Psoas muscle (tissue), 8 donors: ENCODE measurements at regions of chr15 and their contacts with region 1.

Region 1: DNA sequence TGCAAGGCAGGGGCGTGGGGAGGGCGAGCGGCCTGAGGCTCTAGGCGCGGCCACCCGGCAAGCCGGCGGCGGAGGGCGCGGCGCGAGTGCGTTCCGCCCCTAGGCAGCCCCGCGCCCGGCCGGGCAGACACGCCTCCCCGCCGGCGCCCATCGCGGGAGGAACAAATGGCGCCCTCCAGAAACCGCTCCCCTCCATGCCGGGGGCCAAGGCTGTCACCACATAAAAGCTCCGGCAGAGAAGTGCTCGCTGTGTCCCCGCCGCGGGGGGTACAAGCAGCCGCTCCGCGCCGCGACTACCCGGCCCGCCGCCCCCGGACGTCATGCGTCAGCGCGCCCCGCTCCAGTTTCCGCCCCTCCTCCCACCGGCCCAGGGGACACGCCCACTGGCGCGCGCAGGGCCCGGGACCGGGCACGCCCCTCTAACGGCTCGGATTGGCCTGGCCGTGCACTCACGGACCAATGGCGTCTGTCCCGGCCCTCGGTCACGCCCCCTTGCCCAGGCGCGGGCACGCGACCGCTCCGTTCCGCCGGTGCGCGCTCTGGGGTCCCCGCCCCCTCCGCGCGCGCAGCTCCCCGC is 391 bp upstream of the KLF13 start:
- DNase-seq: peak; percentile 94 to 100
- ATAC-seq: peak; percentile 91 to 96 (median 92)
- H3K4me3 ChIP-seq: peak overlapping the region; percentile 79
- H3K27ac ChIP-seq: peak overlapping the region; percentile 97
- H3K4me1 ChIP-seq: peaks cover 33% of the 10 kb centered on the region
- H3K27me3 ChIP-seq: no peaks in the 10 kb centered on the region
- CTCF ChIP-seq: no peak

Region 2: GRCh38 chr15:30991255-30992072 is 334.8 kb before region 1 on chr15 and contains the start of gene MTMR10:
- intact Hi-C with region 1: loop called in 1 of 2 experiments (anchors 5 kb)
- DNase-seq: peak; percentile 66 to 89
- ATAC-seq: peak; percentile 90 to 92 (median 91)
- H3K4me3 ChIP-seq: peak within 1 kb of the TSS; percentile 84
- H3K27ac ChIP-seq: peak within 1 kb of the TSS; percentile 92
- H3K4me1 ChIP-seq: peaks cover 43% of the 10 kb centered on the region
- H3K27me3 ChIP-seq: no peaks in the 10 kb centered on the region
- CTCF ChIP-seq: no peak
- total RNA-seq, gene MTMR10: 22.1 to 52.3 (median 37.1) TPM

Region 3: GRCh38 chr15:31241888-31242522 is 84.2 kb before region 1 on chr15:
- intact Hi-C with region 1: loop called in 1 of 2 experiments (anchors 5 kb)
- DNase-seq: no peak
- ATAC-seq: no peak
- H3K4me3 ChIP-seq: no peak overlapping the region
- H3K27ac ChIP-seq: no peak overlapping the region
- H3K4me1 ChIP-seq: peaks cover 6% of the 10 kb centered on the region
- H3K27me3 ChIP-seq: no peaks in the 10 kb centered on the region
- CTCF ChIP-seq: no peak

Region 4: DNA sequence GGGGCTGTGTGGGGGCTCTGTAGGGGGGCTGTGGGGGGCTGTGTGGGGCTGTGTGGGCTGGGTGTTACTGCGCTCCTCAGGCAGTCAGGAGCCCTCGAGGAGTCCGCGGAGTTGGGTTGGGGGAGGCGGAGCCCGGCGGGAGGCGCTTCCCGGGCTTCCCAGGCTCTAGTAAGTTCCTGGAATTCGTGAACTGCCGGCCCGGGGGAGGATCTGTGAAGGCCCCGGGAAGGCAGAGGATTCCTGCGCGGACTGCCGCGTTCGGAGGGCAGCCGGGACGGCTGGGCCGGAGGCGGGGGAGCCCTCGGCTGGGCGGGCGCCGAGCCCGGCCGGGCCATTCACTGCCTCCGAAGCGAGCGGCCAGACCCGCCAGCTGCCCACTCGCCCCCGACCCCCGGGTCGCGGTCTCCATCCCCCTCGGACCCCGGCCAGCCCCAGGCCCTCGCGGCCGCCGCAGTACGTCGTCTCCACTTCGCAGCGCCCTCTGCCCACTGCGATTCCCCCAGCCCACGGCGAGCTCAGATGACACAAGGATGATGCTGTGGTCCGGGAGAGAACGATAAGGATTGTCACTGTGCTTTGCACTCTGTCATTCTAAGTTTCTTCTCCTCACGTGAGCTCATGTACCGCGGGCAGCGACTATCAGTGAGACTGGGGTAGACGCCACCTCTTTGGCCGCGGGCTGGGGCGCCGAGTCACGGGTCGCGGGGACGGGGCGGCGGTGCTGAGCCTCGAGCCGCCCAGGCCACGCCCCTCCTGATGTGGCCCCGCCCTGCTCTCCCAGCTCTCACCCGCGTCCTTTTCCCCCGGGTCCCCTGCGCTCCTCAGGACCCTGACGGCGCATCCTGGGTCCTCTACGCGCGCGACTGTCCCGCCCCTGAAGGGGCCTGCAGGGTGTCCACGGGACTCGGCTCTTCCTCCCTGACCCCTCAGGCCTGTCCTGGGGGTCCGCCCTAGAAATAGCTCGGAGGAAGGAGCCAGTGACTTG is 65.7 kb after region 1 on chr15:
- intact Hi-C with region 1: loop called (anchors 2 to 5 kb)
- DNase-seq: peak; percentile 78 to 94
- ATAC-seq: peak; percentile 63 to 76 (median 67)
- H3K4me3 ChIP-seq: peak overlapping the region; percentile 86
- H3K27ac ChIP-seq: peak overlapping the region; percentile 80
- H3K4me1 ChIP-seq: peaks cover 8% of the 10 kb centered on the region
- H3K27me3 ChIP-seq: no peaks in the 10 kb centered on the region
- CTCF ChIP-seq: no peak

Region 5: GRCh38 chr15:31435261-31435911 is 109.1 kb after region 1 on chr15:
- intact Hi-C with region 1: loop called in 1 of 2 experiments (anchors 5 kb)
- DNase-seq: peak; percentile 59 to 91
- ATAC-seq: peak; percentile 78 to 93 (median 86)
- H3K4me3 ChIP-seq: peak overlapping the region; percentile 44
- H3K27ac ChIP-seq: peak overlapping the region; percentile 55
- H3K4me1 ChIP-seq: peaks cover 1% of the 10 kb centered on the region
- H3K27me3 ChIP-seq: no peaks in the 10 kb centered on the region
- CTCF ChIP-seq: peak; percentile 73